Right cardiac atrium (tissue), 5 donors: ENCODE measurements at regions of chr5 and their contacts with region 1.

Region 1: GRCh38 chr5:79857714-79858409 is 133.2 kb downstream of the MTX3 start:
- DNase-seq: peak; percentile 70 to 90 (median 83)
- ATAC-seq: peak; percentile 50 to 74
- H3K4me3 ChIP-seq: no peak overlapping the region
- H3K27ac ChIP-seq: no peak overlapping the region
- H3K4me1 ChIP-seq: no peaks in the 10 kb centered on the region
- H3K27me3 ChIP-seq: no peaks in the 10 kb centered on the region

Region 2: GRCh38 chr5:79020861-79021561 is 836.9 kb before region 1 on chr5:
- intact Hi-C with region 1: loop called in 1 of 4 experiments (anchors 10 kb)
- DNase-seq: peak; percentile 52 to 69 (median 64)
- ATAC-seq: peak; percentile 81 to 87
- H3K4me3 ChIP-seq: peak overlapping the region; percentile 21
- H3K27ac ChIP-seq: no peak overlapping the region
- H3K4me1 ChIP-seq: no peaks in the 10 kb centered on the region
- H3K27me3 ChIP-seq: no peaks in the 10 kb centered on the region

Region 3: DNA sequence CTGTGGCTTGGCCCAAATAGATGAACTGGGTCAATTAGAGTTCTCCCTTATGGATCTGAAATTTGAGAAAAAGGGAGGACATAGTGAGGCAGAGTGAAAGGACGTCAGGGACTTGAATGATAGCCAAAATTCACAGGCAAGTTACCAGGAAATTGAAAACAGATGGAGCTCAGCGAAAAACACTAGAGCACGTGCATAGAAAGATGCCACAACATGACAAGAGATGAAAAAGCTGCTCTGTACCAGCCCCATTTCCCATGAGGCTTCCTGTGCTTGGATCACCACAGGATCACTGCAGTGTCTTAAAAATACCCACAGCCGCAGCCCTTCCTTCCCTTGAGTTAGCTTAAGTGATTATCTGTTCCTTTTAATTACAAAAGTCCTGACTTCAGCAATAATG is 304.9 kb before region 1 on chr5:
- intact Hi-C with region 1: loop called in 1 of 4 experiments (anchors 5 kb)
- DNase-seq: no peak
- ATAC-seq: no peak
- H3K4me3 ChIP-seq: no peak overlapping the region
- H3K27ac ChIP-seq: no peak overlapping the region
- H3K4me1 ChIP-seq: no peaks in the 10 kb centered on the region
- H3K27me3 ChIP-seq: no peaks in the 10 kb centered on the region

Region 4: DNA sequence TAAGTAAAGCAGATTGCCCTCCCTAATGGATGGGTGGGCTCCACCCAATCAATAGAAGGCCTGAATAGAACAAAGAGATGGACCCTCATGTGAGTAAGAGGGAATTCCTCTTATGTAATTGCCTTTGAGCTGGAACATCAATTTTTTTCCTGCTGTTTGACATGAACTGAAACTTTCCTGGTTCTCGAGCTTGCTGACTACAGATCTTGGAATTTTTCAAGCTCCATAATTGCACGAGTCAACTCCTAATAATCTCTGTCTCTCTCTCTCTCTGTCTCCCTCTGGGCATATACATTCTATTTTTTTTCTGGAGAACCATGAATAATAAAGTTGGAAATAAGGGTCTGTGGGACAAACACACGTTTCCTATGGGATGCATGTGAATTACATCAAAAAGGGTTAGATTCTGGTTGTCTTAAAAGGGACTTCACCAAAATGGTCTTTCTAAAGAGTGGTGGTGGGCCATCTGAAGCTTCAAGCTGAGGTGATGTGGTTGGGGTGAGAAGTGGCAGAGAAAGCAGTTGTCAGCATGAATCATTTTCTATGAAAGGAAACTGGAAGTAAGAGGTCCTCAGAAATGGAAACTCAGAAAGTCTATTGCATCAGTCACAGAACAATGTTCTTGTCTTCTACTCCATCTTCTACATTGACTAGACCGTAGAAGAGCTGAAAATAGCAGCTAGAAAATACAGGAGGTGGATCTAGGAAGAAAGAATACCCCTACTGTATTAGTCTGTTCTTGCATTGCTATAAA is 296.9 kb before region 1 on chr5:
- intact Hi-C with region 1: loop called in 1 of 4 experiments (anchors 5 kb)
- DNase-seq: no peak
- ATAC-seq: no peak
- H3K4me3 ChIP-seq: no peak overlapping the region
- H3K27ac ChIP-seq: no peak overlapping the region
- H3K4me1 ChIP-seq: no peaks in the 10 kb centered on the region
- H3K27me3 ChIP-seq: no peaks in the 10 kb centered on the region

Region 5: DNA sequence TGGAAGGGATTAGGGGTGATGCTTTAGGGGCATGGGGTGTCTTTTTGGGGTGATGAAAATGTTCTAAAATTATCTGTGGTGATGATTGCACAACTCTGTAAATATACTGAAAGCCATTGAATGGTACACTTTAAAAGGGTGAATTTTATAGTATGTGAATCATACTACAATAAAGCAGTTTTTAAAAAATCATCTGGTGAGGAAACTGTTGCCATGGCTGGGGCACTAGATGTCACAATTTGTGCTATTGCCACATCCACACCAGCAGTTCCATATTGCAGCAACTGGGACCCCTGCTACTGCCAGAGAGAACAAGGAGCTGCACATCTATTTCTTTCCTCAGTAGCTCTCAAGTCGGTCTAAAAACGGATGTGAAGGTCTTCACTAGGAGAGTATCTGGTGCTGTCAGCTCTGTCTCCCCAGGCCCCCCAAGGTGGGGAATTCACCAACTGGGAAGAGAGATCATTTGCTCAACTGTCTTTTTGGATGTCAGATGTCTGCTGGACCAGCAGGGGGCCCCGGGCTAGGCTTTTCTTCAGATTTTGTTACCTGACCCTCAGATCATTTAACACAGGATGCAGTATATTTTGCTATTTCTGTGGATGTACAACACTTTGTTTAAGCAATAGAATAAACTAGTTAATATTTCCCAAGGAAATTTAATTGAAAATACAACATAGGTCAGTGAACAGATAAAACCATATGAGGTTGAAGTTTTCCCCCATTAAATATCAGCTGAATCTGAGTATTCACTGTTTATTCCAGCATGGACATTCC is 155.1 kb before region 1 on chr5:
- intact Hi-C with region 1: loop called in 1 of 4 experiments (anchors 10 kb)
- DNase-seq: no peak
- ATAC-seq: no peak
- H3K4me3 ChIP-seq: no peak overlapping the region
- H3K27ac ChIP-seq: peak overlapping the region; percentile 45
- H3K4me1 ChIP-seq: peaks cover 4% of the 10 kb centered on the region
- H3K27me3 ChIP-seq: no peaks in the 10 kb centered on the region

Region 6: GRCh38 chr5:79806741-79807140 is 51.1 kb before region 1 on chr5:
- intact Hi-C with region 1: no loop called
- DNase-seq: peak in 1 of 3 donors; percentile 17
- ATAC-seq: peak; percentile 33 to 61
- H3K4me3 ChIP-seq: no peak overlapping the region
- H3K27ac ChIP-seq: no peak overlapping the region
- H3K4me1 ChIP-seq: peaks cover 4% of the 10 kb centered on the region
- H3K27me3 ChIP-seq: no peaks in the 10 kb centered on the region

Region 7: DNA sequence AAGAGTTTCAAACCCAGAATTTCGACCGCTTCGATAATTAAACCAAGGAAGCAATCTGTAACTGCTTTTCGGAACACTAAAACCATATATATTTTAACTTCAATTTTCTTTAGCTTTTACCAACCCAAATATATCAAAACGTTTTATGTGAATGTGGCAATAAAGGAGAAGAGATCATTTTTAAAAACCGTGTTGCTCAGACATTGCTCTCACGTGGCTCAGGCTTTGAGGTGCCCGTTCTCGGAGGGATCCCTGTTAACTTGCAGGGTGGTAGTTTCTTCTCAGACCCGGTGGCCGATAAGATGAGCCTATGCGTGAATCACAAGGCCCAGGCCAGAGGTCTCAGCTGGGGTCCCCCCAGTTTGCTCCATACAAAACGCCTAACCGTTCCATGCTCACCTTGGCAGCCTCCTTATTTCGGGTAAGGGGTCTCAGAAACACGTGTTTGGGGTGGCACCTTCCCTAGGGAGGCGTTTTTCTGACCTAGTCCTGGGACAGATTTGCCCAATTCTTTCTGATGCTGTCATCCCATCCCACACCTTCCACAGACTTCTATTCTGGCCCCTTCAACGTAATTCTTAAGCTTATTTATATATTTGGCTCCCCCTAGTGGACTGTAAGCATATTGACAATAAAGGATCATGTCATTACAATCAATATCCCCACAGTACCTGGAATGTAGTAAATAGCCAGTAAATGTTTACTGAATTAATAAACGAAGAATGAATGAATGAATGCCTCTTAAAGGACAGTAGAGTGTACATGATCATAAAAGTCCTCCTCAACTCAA is 225.4 kb after region 1 on chr5:
- intact Hi-C with region 1: loop called in 2 of 4 experiments (anchors 5 to 10 kb)
- DNase-seq: peak in 2 of 3 donors; percentile 31 to 47
- ATAC-seq: peak; percentile 85 to 90
- H3K4me3 ChIP-seq: peak overlapping the region; percentile 52
- H3K27ac ChIP-seq: peak overlapping the region; percentile 77
- H3K4me1 ChIP-seq: no peaks in the 10 kb centered on the region
- H3K27me3 ChIP-seq: no peaks in the 10 kb centered on the region